Activated naive CD4-positive, alpha-beta T cell treated with anti-CD3 and anti-CD28 coated beads for 36 hours (primary cell): ENCODE measurements at regions of chr1 and their contacts with region 1.

Region 1: DNA sequence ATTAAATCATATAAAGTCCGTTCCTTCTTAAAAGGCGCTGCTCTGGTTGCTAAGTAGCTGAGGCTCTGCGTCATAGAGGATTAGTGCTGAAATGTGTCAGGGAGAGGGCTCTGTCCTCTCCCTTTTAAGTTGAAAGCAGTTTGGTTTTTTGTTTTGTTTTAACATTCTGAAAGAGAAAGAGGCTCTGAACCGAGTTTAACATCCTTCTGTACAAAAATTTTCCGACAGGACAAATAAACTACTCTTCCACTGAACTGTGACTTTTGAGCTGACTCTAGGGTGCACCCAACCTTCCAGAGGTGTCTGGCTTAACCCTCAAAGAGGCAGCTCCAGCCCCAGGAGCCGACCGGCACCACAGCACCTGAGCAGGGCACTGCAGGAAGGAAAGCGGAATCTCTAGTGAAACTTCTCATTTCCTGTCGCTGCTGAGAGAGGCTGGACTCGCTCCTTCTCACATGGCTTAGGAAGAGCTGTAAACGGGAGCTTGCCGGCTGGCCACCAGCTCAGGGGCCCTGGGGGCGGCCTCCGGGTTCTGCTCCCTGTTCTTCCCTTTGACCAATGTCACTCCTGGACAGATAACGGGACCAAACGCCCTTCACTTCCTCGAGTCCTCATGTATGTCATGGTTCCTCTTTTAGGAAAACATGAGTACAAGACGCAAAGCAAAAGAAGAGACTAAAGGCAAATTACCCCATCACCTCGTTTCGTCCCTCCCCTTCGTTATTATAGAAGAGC is 1.2 kb downstream of the VAV3 start:
- DNase-seq: peak; percentile 73
- H3K4me3 Mint-ChIP-seq: peak overlapping the region; percentile 87
- H3K27ac Mint-ChIP-seq: peak overlapping the region; percentile 96
- H3K4me1 Mint-ChIP-seq: peaks cover 25% of the 10 kb centered on the region
- H3K27me3 Mint-ChIP-seq: no peaks in the 10 kb centered on the region

Region 2: DNA sequence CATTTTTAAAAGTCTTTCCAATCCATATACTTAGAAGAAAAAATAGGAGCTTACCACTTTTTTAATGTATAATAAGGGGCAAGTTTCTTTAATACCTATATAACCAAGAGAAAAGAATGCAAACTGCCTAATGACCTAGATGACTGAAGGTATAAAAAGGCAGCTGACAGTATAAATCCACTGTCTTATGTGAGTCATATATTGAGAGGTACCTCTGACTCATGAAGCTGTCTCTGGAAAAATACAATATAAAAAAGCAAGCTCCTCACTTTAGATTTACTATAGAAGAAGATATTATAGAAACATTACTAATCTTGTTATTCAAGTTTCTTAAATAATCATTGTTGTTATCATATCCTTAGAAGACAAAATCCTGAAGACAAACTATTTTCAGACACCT is 143.0 kb before region 1 on chr1:
- CTCF ChIA-PET with region 1: no interaction called
- intact Hi-C with region 1: loop called (anchors 1 kb)
- DNase-seq: no peak
- H3K4me3 Mint-ChIP-seq: no peak overlapping the region
- H3K27ac Mint-ChIP-seq: peak overlapping the region; percentile 83
- H3K4me1 Mint-ChIP-seq: peaks cover 30% of the 10 kb centered on the region
- H3K27me3 Mint-ChIP-seq: no peaks in the 10 kb centered on the region

Region 3: DNA sequence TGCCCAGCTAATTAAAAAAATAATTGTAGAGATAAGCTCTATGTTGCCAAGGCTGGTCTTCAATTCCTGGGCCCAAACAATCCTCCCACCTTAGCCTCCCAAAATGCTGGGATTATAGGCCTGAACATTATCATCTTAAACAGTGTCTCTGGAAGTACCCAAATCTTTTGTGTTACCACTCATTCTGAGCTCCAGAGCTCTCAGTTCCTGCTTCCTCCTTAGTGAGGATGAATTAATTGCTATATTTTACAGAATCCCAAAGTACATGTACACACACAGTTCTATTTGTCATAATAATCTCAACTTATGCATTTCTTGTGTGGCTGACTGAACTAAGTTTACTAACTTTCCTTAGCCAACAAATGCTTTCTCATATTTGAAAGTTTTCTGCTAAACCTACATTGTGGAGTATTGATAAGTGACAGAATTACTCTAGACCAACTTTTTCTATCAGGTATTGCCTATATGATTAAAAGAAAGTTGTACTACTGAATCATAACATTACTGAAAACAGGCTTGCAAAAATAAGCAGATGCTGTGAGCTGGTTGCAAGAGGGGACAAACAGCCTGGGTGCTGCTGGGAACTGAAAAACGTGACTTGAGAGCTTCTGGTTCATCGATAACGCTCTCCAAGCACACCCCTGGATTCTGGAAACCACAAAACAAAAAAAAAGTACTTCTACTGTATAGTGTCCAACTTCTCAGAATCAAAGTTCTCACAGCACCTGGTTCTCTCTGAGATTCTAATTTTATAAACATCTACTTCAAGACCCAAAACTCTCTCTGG is 14.1 kb before region 1 on chr1:
- CTCF ChIA-PET with region 1: interaction called, 4 read pairs
- intact Hi-C with region 1: loop called (anchors 1 kb)
- DNase-seq: peak; percentile 34
- H3K4me3 Mint-ChIP-seq: no peak overlapping the region
- H3K27ac Mint-ChIP-seq: no peak overlapping the region
- H3K4me1 Mint-ChIP-seq: peaks cover 24% of the 10 kb centered on the region
- H3K27me3 Mint-ChIP-seq: no peaks in the 10 kb centered on the region

Region 4: GRCh38 chr1:108049178-108049819 is 85.5 kb after region 1 on chr1:
- CTCF ChIA-PET with region 1: interaction called, 4 read pairs
- intact Hi-C with region 1: loop called (anchors 1 kb)
- DNase-seq: peak; percentile 51
- H3K4me3 Mint-ChIP-seq: no peak overlapping the region
- H3K27ac Mint-ChIP-seq: no peak overlapping the region
- H3K4me1 Mint-ChIP-seq: peaks cover 35% of the 10 kb centered on the region
- H3K27me3 Mint-ChIP-seq: no peaks in the 10 kb centered on the region

Region 5: GRCh38 chr1:108107658-108108518 is 144.1 kb after region 1 on chr1:
- CTCF ChIA-PET with region 1: no interaction called
- intact Hi-C with region 1: loop called (anchors 1 kb)
- DNase-seq: peak; percentile 76
- H3K4me3 Mint-ChIP-seq: no peak overlapping the region
- H3K27ac Mint-ChIP-seq: peak overlapping the region; percentile 71
- H3K4me1 Mint-ChIP-seq: peaks cover 15% of the 10 kb centered on the region
- H3K27me3 Mint-ChIP-seq: no peaks in the 10 kb centered on the region

Region 6: GRCh38 chr1:108199781-108200570 is 236.2 kb after region 1 on chr1 and contains the start of gene SLC25A24:
- CTCF ChIA-PET with region 1: interaction called, 4 read pairs
- intact Hi-C with region 1: loop called (anchors 2 kb)
- DNase-seq: peak; percentile 70
- H3K4me3 Mint-ChIP-seq: peak within 1 kb of the TSS; percentile 86
- H3K27ac Mint-ChIP-seq: no peak within 1 kb of the TSS
- H3K4me1 Mint-ChIP-seq: peaks cover 14% of the 10 kb centered on the region
- H3K27me3 Mint-ChIP-seq: no peaks in the 10 kb centered on the region
- total RNA-seq, gene SLC25A24: 5.2 to 5.5 TPM